Activated T-helper 2 cell treated with anti-CD3 and anti-CD28 coated beads, Interferon-gamma antibody, Interleukin-2, Interleukin-4, amounts not matched to agents 10 μg/mL and 5 μg/mL and 100 μg/mL, durations not matched to agents 14 hours and 24 hours and 36 hours (primary cell): ENCODE measurements at regions of chr4 and their contacts with region 1.

Region 1: DNA sequence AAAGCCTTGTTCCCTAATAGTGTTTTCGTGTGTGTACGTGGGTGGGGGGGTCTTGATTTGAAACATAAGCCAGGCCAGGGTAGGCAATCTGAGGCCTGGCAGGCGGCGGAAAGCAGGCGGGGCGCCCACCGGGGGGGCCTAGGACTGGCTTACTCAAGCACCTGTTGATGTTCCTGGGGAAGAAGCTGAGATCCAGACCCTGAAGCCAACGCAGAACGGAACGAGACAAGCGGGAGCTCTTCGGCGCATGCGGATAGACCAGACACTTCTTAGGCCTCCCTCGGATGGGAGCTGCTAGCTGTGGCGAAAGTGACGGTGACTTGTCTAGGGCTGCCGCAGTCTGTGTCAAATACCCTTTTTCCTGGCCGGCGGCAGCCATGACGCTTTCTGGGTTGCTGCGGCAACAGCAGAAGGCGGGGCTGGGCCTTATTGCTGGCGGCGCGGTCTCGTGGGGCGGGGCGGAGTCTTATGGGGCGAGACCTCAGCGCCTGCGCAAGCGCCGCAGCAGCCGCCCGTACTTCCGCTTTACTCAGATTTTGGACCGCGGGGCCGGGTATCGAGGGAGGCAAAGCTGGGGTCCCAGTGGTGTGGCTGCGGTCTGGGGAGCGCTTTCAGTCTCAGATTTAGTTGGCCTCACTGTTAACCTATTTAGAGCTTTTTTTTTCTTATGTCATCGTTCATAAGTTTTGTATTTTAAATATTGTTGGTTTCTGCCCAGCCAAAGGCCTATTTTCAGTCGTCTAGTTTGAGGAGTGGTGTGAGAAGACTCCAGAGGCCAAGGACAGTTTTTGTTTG is at the start of gene SPATA4:
- DNase-seq: peak; percentile 90
- H3K4me3 Mint-ChIP-seq: peak within 1 kb of the TSS; percentile 71
- H3K27ac Mint-ChIP-seq: no peak within 1 kb of the TSS
- H3K4me1 Mint-ChIP-seq: peaks cover 25% of the 10 kb centered on the region
- H3K27me3 Mint-ChIP-seq: peaks cover 42% of the 10 kb centered on the region
- total RNA-seq, gene SPATA4: not detected in 2 replicates

Region 2: DNA sequence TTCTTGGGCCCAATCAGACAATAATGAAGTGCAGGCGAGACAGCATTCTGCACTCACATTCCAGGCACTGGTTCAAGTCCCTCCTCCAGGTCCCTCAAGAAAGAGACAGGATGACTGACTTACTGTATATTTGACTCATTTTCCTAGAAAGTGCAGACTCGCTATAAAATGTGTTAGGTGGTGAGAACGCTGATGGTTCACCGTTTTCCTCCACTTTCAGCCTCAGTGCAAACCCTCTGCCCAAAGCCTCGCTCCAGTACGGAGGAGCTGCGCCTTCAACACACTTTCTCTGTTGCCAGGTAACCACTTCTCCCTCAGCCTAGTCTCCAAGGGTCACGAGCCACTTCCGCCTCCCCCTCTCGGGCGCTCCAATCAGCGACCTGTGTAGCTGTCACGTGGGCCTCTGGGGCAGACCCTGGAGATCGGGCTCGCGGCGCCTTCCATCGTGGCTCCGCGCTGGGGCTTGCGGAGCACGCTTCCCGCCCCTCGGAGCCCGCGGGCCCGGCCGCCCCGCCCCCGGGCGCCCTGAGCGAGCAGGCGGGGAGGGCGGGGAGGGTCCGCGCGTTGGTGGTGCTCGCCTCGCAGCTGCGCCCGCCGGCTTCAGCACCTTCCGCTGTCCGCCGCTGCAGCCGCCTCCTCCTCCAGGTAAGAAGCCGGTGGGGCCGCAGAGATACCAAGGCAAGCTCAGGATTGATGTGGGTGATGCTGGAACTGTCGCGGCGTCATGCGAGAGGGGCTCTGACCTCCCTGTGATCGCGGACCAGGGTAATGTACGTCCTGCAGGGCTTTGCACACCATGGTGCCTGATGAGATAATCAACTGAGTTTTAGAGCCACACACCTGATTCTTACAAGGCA is 129.7 kb before region 1 on chr4 and contains the start of gene WDR17:
- intact Hi-C with region 1: loop called (anchors 2 kb)
- DNase-seq: peak; percentile 73
- H3K4me3 Mint-ChIP-seq: peak within 1 kb of the TSS; percentile 82
- H3K27ac Mint-ChIP-seq: no peak within 1 kb of the TSS
- H3K4me1 Mint-ChIP-seq: peaks cover 11% of the 10 kb centered on the region
- H3K27me3 Mint-ChIP-seq: peaks cover 23% of the 10 kb centered on the region
- total RNA-seq, gene WDR17: 1.0 and 1.4 TPM in 2 replicates

Region 3: GRCh38 chr4:176123710-176124407 is 71.5 kb before region 1 on chr4:
- intact Hi-C with region 1: loop called (anchors 1 kb)
- DNase-seq: no peak
- H3K4me3 Mint-ChIP-seq: no peak overlapping the region
- H3K27ac Mint-ChIP-seq: peak overlapping the region; percentile 47
- H3K4me1 Mint-ChIP-seq: peaks cover 14% of the 10 kb centered on the region
- H3K27me3 Mint-ChIP-seq: no peaks in the 10 kb centered on the region

Region 4: GRCh38 chr4:176270669-176271068 is 75.3 kb after region 1 on chr4:
- intact Hi-C with region 1: no loop called
- DNase-seq: no peak
- H3K4me3 Mint-ChIP-seq: no peak overlapping the region
- H3K27ac Mint-ChIP-seq: no peak overlapping the region
- H3K4me1 Mint-ChIP-seq: no peaks in the 10 kb centered on the region
- H3K27me3 Mint-ChIP-seq: no peaks in the 10 kb centered on the region

Region 5: GRCh38 chr4:176319704-176320339 is 124.4 kb after region 1 on chr4 and contains the start of gene SPCS3:
- intact Hi-C with region 1: loop called (anchors 1 kb)
- DNase-seq: peak; percentile 92
- H3K4me3 Mint-ChIP-seq: peak within 1 kb of the TSS; percentile 94
- H3K27ac Mint-ChIP-seq: peak within 1 kb of the TSS; percentile 93
- H3K4me1 Mint-ChIP-seq: peaks cover 30% of the 10 kb centered on the region
- H3K27me3 Mint-ChIP-seq: peaks cover 5% of the 10 kb centered on the region
- total RNA-seq, gene SPCS3: 197 and 208 TPM in 2 replicates

Region 6: DNA sequence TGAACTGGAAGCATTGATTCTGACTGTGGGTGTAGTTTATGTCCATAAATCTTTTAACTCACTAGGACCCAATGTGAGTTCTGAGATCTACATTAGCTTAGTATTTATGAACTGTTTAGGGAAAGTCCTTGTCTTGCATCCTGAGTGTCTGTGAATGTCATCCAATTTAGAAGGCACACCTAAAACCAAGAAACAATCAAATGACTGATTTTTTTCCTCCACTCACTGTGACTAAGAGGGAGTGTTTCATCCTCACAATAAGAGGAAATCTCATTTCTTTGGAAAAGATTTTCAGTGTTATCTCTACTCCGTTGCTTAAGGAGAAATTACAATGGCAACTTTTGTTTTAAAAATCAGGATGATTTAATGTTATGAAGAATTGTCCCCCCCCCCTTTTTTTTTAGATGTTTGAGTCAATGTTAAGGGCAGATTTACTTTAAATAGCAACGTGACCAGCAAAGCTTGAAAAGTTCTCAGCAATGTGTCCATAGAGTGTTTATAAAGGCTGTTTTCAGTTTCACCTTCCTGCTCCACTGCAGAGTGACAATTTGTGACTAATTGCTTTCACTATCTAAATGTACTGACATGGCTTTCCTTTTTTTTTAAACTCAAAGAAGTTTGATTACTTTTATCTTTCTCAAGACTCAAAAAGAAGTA is 297.4 kb after region 1 on chr4:
- intact Hi-C with region 1: loop called (anchors 10 kb)
- DNase-seq: no peak
- H3K4me3 Mint-ChIP-seq: peak overlapping the region; percentile 22
- H3K27ac Mint-ChIP-seq: peak overlapping the region; percentile 71
- H3K4me1 Mint-ChIP-seq: peaks cover 9% of the 10 kb centered on the region
- H3K27me3 Mint-ChIP-seq: no peaks in the 10 kb centered on the region